Activated CD8-positive, alpha-beta memory T cell treated with anti-CD3 and anti-CD28 coated beads, Interleukin-2, amount 10 ng/mL, durations not matched to agents 7 days and 5 days (primary cell): ENCODE measurements at regions of chr1 and their contacts with region 1.

Region 1: DNA sequence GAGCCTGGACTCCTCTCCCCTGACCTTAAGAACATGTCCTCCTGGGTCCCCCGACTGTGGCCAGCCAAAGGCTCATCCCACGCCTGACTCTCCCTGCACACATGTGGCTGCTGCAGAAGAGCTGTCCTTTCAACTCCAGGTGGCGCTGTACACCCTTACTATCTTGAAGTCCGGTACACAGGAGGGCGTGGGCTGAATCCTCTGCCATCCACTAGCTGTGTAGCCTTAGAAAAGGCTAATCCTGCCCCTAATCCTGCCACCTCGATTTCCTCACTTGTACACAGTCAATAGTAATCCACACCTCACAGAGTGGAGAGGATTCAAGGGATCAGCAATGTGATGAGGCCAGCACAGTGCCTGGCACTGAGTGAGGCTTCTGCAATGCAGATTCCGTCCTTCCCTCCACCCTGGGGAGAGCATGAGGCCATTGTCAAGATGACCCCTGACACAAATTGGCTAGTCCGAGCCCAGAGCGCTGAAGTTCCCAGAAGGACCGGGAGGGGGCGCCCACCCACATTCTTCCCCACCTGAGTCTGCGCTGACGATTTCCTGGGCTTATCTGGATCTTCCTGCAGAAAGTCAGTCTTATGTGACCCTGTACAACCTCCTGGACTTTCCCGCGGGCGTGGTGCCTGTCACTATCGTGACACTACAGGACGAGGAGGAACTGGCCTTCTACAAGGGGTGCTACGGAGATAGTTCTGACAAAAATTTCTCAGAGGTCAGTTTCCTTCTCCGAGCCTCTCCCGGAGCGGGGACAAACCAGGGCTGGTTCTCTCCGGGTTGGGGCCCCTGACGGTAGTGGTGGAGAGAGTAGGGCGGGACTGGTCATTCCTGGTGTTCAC is 47.1 kb upstream of the DMBX1 start:
- DNase-seq: peak; percentile 80
- ATAC-seq: peak; percentile 81
- H3K4me3 Mint-ChIP-seq: peak overlapping the region; percentile 72
- H3K27ac Mint-ChIP-seq: peak overlapping the region; percentile 66
- H3K4me1 Mint-ChIP-seq: peaks cover 8% of the 10 kb centered on the region
- H3K27me3 Mint-ChIP-seq: peaks cover 28% of the 10 kb centered on the region

Region 2: DNA sequence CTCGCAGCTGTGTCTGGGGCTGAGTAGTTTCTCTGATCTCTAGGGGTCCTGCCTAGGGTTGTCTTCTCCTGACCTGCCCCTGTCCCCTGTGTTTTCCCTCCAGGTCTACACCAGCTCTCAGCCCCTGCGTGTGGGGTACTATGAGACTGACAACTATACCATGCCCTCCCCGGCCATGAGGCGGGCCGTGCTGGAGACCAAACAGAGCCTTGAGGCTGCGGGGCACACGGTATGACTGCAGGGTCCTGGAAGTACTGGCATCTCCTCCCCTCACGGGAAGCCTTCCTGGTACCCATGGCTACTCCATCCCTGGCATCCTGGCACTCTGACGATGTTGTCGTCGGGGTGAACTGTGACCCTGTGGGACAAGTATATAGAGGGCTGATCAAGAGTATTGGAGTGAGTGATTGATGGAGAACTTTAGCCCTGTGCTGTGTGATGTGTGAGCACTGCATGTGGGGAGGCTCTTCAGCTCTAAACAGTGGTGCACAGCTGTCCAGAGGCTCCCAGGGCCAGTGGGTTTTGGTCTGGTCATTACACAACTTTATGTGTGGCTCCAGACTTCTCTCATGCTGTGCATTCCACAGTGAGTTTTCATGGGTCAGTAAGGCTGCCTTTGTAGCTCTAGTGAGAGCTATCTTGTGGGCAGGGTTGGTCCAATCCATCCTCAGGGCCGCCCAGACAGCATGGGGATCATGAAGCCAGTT is 34.0 kb before region 1 on chr1:
- CTCF ChIA-PET with region 1: interaction called, 10 read pairs
- DNase-seq: no peak
- ATAC-seq: no peak
- H3K4me3 Mint-ChIP-seq: no peak overlapping the region
- H3K27ac Mint-ChIP-seq: no peak overlapping the region
- H3K4me1 Mint-ChIP-seq: peaks cover 4% of the 10 kb centered on the region
- H3K27me3 Mint-ChIP-seq: no peaks in the 10 kb centered on the region

Region 3: GRCh38 chr1:46452931-46453325 is 10.4 kb after region 1 on chr1:
- CTCF ChIA-PET with region 1: interaction called, 12 read pairs
- DNase-seq: no peak
- ATAC-seq: no peak
- H3K4me3 Mint-ChIP-seq: no peak overlapping the region
- H3K27ac Mint-ChIP-seq: no peak overlapping the region
- H3K4me1 Mint-ChIP-seq: peaks cover 5% of the 10 kb centered on the region
- H3K27me3 Mint-ChIP-seq: peaks cover 45% of the 10 kb centered on the region

Region 4: DNA sequence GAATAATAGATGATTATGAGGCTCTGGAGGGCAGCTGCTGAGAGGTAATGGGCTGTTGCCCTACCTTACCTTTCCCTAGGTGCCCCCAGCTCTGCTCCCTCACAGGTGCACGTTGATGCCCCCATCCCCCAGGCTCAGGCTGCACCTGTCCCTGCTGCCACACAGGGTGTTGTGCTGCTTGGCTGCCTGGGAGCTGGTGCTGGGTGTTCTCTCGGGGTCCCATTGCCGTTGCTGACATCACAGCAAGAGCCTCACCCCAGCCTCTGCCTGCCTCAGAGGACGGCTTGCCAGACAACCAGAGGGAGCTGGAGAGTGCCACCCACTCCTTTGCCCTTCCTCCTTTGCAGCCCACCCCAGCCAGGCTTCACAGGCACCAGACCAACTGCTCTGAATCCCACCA is 15.7 kb after region 1 on chr1:
- CTCF ChIA-PET with region 1: interaction called, 12 read pairs
- DNase-seq: no peak
- ATAC-seq: no peak
- H3K4me3 Mint-ChIP-seq: no peak overlapping the region
- H3K27ac Mint-ChIP-seq: no peak overlapping the region
- H3K4me1 Mint-ChIP-seq: no peaks in the 10 kb centered on the region
- H3K27me3 Mint-ChIP-seq: peaks cover 38% of the 10 kb centered on the region

Region 5: GRCh38 chr1:46477153-46477929 is 34.8 kb after region 1 on chr1:
- CTCF ChIA-PET with region 1: interaction called, 13 read pairs
- DNase-seq: peak; percentile 81
- ATAC-seq: peak; percentile 83
- H3K4me3 Mint-ChIP-seq: no peak overlapping the region
- H3K27ac Mint-ChIP-seq: no peak overlapping the region
- H3K4me1 Mint-ChIP-seq: no peaks in the 10 kb centered on the region
- H3K27me3 Mint-ChIP-seq: peaks cover 41% of the 10 kb centered on the region

Region 6: DNA sequence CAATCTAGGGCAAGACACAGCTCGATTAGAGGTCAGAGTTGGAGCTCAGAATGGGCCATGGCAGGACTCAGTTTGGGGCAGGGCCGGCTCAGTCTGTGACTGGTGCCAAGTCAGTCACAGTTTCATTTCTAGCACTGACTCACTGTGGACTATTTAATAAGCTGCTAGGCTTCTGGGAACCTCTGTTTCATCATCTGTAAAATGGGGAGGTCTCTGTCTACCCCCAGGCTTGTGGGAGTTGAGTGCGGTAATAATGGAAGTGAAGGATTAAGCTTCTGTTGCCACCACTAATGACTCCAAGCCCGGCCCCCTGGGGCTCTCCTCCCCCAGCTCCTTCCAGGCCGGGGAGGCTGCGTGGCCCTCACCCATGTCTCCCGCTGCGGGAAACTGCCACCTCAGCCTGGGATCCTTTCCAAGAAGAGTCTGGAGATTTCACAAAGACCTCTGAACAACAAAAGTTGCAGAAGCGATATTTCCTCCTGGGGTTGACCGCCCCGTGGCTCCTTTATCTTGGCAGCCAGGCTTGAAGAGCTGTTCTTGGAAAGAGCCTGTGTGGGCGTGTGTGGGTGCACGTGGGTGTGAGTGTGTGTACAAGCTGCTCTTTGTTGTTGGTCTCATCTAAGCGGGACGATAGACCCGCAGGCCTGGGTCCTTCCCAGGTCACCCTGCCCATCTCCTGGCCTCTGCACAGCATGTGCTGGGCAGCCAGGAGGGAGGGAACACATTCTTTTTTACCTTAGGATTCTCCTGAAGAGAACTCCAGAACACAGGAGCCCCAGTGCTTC is 79.8 kb after region 1 on chr1:
- CTCF ChIA-PET with region 1: interaction called, 124 read pairs
- DNase-seq: peak; percentile 60
- ATAC-seq: peak; percentile 91
- H3K4me3 Mint-ChIP-seq: no peak overlapping the region
- H3K27ac Mint-ChIP-seq: peak overlapping the region; percentile 71
- H3K4me1 Mint-ChIP-seq: peaks cover 32% of the 10 kb centered on the region
- H3K27me3 Mint-ChIP-seq: peaks cover 28% of the 10 kb centered on the region

Region 7: DNA sequence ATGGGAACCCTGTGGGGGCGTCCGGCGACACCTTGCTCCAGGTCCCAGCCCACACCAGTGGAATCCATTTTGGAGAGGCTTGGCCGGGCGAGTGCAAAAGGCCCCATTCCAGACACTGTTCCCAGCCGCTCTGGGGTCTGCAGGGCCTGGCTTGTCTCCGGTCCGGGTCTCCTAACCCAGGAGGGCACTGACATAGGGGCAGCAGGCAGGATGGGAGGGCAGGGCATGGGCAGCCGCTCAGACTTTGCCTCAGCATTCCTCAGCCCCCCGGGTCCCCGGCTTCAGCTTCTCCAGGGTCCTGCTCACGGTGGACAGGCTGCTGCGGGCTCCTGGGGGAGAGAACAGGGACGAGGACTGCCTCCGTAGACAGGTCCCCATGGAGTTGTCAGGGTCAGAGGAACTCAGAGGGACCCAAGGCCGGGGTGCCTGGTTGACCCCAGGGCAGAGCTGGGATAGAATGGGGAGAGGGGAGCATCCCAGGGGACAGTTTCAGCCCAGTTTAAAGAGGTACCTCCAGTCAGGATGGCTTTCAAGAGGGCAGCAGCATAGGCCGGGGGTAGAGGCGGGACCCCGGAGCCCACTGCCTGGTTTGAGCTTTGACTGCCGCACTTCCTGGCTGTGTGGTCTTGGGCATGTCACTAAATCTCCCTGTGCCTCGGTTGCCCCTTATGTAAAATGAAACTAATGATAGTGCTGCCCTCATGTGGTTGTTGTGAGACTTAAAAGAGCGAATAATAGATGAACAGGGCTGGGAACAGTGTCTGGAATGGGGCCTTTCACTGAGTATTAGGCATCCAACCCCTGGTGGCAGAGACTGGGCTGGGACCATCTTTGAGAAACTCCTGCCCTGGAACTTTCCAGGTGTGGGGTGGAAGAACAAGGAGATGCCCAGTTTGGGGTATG is 105.2 kb after region 1 on chr1:
- CTCF ChIA-PET with region 1: interaction called, 27 read pairs
- DNase-seq: no peak
- ATAC-seq: peak; percentile 25
- H3K4me3 Mint-ChIP-seq: no peak overlapping the region
- H3K27ac Mint-ChIP-seq: peak overlapping the region; percentile 70
- H3K4me1 Mint-ChIP-seq: peaks cover 21% of the 10 kb centered on the region
- H3K27me3 Mint-ChIP-seq: peaks cover 40% of the 10 kb centered on the region